Left ventricle myocardium inferior (tissue), 1 donor: ENCODE measurements at regions of chr9 and their contacts with region 1.

Region 1: DNA sequence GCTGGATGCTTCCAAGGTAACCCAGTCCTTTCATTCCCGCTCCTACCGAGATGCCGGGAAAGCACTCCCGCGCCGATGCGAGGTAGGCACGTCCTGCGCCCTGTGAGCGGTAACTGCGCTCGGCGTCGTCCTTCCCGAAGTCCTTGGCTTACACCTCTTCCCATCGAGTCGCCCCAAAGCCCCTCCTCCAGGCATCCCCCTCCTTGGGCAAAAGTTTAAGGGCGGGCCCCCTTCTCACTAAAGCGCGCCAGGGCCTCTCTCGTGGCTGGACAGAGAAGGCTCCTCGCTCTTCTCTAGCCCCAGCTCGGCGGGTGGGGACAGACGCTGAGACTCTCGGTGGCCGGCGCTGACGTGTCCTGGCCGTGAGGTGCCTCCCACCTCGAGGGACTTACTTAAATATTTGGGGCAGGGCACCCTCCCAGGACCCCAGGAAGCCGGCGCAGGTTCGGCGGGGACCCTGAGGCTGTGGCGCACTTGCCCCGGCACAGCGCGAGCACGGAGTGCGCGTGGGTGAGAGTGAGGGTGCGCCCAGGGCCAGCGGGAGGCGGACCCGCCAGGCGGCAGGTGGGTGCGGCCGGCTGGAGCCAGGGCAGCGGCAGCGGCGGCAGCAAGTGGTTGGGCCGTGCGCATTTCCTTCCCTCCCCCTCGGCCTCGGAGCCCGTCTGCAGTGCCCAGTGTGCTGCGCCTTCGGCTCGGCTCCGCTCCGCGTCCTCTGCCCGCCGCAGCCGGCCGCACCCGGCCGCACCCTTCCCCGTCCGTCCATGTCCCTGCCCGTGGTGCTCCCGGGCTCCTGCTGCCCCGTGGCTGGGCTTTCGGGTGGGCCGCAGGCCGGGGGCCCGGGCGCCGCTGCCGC is at the start of gene ENTREP1:
- DNase-seq: peak; percentile 77
- H3K4me3 ChIP-seq: peak within 1 kb of the TSS; percentile 81
- H3K27ac ChIP-seq: peak within 1 kb of the TSS; percentile 91
- H3K4me1 ChIP-seq: peaks cover 48% of the 10 kb centered on the region
- H3K27me3 ChIP-seq: peaks cover 5% of the 10 kb centered on the region
- CTCF ChIP-seq: peak; percentile 43
- total RNA-seq, gene ENTREP1: 22.1 TPM

Region 2: GRCh38 chr9:69253057-69253456 is 71.7 kb before region 1 on chr9:
- intact Hi-C with region 1: loop called (anchors 10 kb)
- DNase-seq: no peak
- H3K4me3 ChIP-seq: no peak overlapping the region
- H3K27ac ChIP-seq: peak overlapping the region; percentile 64
- H3K4me1 ChIP-seq: peaks cover 40% of the 10 kb centered on the region
- H3K27me3 ChIP-seq: no peaks in the 10 kb centered on the region
- CTCF ChIP-seq: no peak